SK-N-SH (cell line): ENCODE measurements at regions of chr17 and their contacts with region 1.

Region 1: GRCh38 chr17:61299517-61300513 is 99.8 kb upstream of the TBX2 start:
- DNase-seq: peak; percentile 55
- H3K4me3 ChIP-seq: no peak overlapping the region; a peak in 1 of 4 replicates
- H3K27ac ChIP-seq: peak overlapping the region; percentile 36 to 78; a peak in 3 of 4 replicates
- H3K4me1 ChIP-seq: peaks cover 19 to 21% of the 10 kb centered on the region in 2 experiments
- H3K27me3 ChIP-seq: no peaks in the 10 kb centered on the region
- CTCF ChIP-seq: no peak
- EP300 ChIP-seq: peak in 1 of 2 experiments; percentile 49; a peak in 1 of 4 replicates
- RAD21 ChIP-seq: no peak

Region 2: GRCh38 chr17:61260071-61260797 is 39.6 kb before region 1 on chr17:
- CTCF ChIA-PET with region 1: no interaction called
- POLR2A ChIA-PET with region 1: no interaction called
- DNase-seq: no peak
- H3K4me3 ChIP-seq: no peak overlapping the region
- H3K27ac ChIP-seq: no peak overlapping the region; a peak in 1 of 4 replicates
- H3K4me1 ChIP-seq: peaks cover 0 to 3% of the 10 kb centered on the region in 2 experiments; a peak in 2 of 4 replicates
- H3K27me3 ChIP-seq: no peaks in the 10 kb centered on the region
- CTCF ChIP-seq: no peak
- EP300 ChIP-seq: no peak
- RAD21 ChIP-seq: no peak

Region 3: DNA sequence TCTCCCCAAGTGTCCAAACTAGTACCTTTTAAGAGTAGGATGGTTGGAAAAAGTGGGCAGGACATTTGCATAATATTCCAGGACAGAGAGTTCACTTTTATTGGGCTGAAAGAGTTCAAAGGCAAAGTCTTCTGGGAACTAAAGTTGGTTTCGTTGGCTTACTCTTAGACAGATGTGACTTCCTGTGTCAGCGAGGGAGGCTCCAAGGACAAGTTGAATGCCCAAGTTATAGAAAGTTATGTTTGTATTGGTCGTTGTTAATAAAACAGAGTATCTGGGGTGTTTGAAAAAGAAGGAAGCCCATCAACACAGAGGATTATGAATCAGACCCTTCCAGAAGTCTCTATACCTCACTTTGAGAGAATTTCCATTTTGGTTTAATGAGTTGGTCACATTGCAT is 17.4 kb before region 1 on chr17:
- CTCF ChIA-PET with region 1: interaction called, 10 read pairs
- POLR2A ChIA-PET with region 1: no interaction called
- DNase-seq: no peak
- H3K4me3 ChIP-seq: no peak overlapping the region
- H3K27ac ChIP-seq: no peak overlapping the region
- H3K4me1 ChIP-seq: peaks cover 2 to 32% of the 10 kb centered on the region in 2 experiments; a peak in 3 of 4 replicates
- H3K27me3 ChIP-seq: no peaks in the 10 kb centered on the region
- CTCF ChIP-seq: no peak
- EP300 ChIP-seq: no peak
- RAD21 ChIP-seq: no peak

Region 4: DNA sequence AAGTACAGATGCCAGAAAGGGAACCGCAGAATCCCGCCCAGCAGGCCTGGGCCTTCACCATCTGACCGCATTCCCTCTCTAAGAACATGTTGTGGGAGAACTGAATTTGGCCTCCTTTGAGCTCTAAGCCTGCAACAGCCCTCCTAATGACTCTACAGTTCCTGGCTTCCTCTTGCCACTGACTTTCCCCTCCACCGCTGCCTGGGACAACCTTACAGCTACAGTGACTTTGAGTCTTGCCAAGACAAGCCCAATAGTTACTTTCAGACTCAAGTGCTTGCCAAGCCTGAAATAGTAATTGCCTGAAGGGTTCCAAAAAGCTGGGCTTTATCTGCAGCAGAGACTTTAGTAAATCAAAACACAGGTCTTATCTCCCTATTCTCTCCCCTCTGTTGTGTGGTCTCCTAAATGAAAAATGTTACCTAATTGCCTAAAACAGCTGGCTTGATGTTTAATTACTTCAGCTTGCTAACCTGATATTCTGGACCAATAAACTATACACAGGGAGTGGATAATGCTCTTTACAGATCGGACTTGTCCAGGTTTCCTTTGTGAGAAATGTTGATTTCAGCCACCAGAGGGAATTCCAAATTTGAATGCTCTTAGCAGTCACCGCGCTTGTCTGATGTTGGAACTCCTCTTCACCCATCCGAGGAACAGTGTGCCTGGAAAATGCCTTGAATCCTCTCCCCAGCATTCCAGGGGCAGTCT is 14.7 kb after region 1 on chr17:
- CTCF ChIA-PET with region 1: interaction called, 10 read pairs
- POLR2A ChIA-PET with region 1: interaction called, 6 read pairs
- DNase-seq: peak; percentile 69
- H3K4me3 ChIP-seq: no peak overlapping the region
- H3K27ac ChIP-seq: peak overlapping the region; percentile 60 to 74
- H3K4me1 ChIP-seq: peaks cover 27 to 37% of the 10 kb centered on the region in 2 experiments
- H3K27me3 ChIP-seq: no peaks in the 10 kb centered on the region
- CTCF ChIP-seq: peak; percentile 52
- EP300 ChIP-seq: peak in 1 of 2 experiments; percentile 86; a peak in 2 of 4 replicates
- RAD21 ChIP-seq: peak; percentile 53